Left cardiac atrium (tissue), 4 donors: ENCODE measurements at regions of chr15 and their contacts with region 1.

Region 1: DNA sequence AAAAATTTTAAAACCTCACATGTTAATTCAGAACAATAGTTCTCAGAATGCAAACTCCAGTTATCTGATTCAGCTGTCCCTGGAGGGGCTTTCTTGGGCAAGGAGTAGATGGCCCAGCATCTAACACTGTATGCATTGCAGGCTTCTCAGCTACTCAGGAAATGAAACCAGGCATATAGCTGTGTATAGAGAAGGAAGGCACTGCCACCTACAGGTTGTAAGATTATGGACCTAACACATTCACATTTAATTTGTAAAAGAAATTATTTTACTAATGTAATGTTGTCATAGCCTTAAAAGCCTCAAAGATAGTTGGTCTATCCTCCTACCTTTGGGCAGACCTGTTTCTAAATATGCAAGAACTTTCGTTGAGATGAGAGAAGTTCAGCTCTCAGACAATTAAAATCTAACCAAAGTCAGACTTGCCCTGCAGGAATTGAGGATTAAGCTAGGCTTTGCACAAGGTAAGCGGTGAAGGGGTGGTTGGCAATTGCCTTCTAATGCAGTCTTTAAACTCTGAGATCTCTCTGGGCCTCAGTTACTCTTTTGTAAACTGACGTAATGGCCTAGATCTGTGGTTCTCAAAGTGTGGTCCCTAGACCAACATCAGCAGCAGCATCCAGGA is 132.8 kb upstream of the SLC24A5 start:
- DNase-seq: no peak
- ATAC-seq: peak; percentile 93 to 94

Region 2: GRCh38 chr15:47473832-47474231 is 514.2 kb before region 1 on chr15:
- intact Hi-C with region 1: loop called in 1 of 2 experiments (anchors 5 kb)
- DNase-seq: peak; percentile 67
- ATAC-seq: peak; percentile 96 to 97

Region 3: GRCh38 chr15:47496343-47497171 is 491.5 kb before region 1 on chr15:
- intact Hi-C with region 1: loop called (anchors 5 to 10 kb)
- DNase-seq: no peak
- ATAC-seq: peak in 1 of 2 donors; percentile 77

Region 4: DNA sequence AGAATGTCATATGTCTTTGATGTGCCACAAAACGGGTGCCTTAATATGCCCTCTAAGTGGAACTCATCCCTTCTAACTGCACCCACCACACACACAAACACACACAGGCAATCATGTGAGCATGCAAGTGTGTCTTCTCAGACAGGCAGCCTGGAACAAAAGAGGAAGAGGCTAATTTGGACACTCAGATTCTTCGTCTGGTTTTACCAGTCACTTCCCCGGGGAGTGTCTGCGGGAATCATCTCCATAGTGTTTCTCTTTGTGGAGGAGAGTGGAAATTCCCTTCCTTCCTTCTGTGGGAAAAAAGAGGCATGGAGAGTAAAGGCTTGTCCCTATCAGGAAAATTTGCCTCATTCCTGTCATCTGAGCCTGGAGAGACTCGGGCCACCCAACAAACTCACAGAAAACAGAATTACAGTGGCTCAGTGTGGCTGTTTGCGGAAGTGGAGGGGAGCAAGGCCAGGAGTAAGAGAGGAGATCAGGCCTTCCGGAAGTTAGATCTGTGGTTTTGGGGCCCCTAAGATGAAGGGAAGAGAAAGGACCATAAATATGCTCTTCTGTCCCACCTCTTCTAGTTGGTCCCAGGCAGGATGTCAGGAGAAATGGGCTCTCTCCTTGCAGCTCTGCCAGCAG is 483.3 kb before region 1 on chr15:
- intact Hi-C with region 1: loop called (anchors 5 to 10 kb)
- DNase-seq: no peak
- ATAC-seq: peak in 1 of 2 donors; percentile 42

Region 5: DNA sequence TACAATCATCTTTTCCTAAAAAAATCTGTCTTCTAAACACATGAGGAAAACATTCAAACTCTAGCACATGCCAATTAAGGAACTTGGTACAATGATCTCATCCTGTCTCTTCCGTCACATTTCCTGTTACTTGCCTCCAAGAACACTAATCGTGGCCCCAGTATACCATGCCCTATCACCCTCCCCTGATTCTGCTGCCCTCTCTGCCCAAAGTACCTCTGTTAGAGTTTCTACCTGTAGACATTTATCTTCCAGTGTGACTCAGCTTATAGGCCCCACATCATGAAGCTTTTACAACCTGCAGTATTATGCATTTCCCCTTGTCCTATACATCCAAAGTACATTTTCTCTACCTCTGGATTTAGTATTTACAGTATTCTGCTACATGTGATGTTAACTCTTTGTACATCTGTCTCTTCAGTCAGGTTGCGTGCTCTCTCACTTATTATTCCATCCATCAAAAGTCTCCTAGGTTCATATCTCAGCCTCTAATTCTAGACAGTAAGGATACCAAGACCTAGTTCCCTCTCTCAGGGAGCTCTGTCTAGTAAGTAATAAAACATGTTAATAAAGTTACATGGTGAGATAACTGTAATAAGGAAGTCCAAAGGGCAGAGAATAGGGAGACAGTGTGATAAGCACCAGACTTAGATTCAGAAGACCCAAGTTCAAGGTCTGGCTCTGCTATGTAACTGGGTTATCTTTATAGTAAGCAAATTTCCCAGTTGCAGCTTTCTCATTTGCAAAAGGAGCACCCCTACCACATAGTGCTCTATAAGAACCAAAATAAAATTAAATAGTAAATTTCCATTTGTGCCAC is 279.6 kb before region 1 on chr15:
- intact Hi-C with region 1: loop called (anchors 2 to 10 kb)
- DNase-seq: no peak
- ATAC-seq: peak in 1 of 2 donors; percentile 34